Colonic mucosa (tissue), 4 donors: ENCODE measurements at regions of chr6 and their contacts with region 1.

Region 1: GRCh38 chr6:52304983-52305390 is 20.4 kb upstream of the MCM3 start:
- DNase-seq: no peak
- H3K4me3 ChIP-seq: no peak overlapping the region
- H3K27ac ChIP-seq: peak overlapping the region; percentile 65
- H3K4me1 ChIP-seq: peaks cover 7% of the 10 kb centered on the region
- H3K27me3 ChIP-seq: no peaks in the 10 kb centered on the region
- CTCF ChIP-seq: no peak

Region 2: DNA sequence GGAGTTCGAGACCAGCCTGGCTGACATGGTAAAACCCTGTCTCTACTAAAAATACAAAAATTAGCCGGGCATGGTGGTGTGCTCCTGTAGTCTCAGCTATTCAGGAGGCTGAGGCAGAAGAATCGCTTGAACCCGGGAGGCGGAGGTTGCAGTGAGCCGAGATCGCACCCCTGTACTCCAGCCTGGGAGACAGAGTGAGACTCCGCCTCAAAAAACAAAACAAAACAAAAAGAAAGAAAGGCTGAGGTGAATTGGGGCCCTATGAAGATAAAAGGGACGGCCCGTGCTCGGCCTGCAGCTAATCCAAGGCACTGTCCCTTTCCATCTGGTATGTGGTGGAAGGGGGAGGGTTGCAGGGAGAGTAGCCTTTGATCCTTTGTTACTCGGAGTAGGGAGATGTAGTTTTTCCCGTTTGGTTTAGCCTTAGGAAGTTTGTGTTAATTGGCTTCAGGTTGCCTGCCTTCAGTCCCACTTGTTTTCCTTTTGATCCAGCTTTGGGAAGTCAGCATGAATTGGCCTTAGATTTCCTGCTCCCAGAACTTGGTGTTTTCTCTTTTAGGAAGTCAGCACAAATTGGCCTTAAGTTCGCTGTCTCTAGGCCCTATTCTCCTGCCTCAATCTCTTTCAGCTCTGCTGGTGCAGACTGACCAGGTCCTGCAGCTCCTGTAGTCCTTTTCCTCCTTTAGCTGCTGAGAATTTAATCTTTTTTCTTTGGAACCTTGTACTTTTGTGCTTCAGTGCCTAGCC is 20.9 kb after region 1 on chr6:
- intact Hi-C with region 1: loop called (anchors 2 kb)
- DNase-seq: peak; percentile 66
- H3K4me3 ChIP-seq: no peak overlapping the region
- H3K27ac ChIP-seq: peak overlapping the region; percentile 85
- H3K4me1 ChIP-seq: peaks cover 12% of the 10 kb centered on the region
- H3K27me3 ChIP-seq: no peaks in the 10 kb centered on the region
- CTCF ChIP-seq: no peak

Region 3: GRCh38 chr6:52361945-52362442 is 57.0 kb after region 1 on chr6 and contains the start of gene PAQR8:
- intact Hi-C with region 1: loop called (anchors 10 kb)
- DNase-seq: peak; percentile 82
- H3K4me3 ChIP-seq: peak within 1 kb of the TSS; percentile 65
- H3K27ac ChIP-seq: peak within 1 kb of the TSS; percentile 73
- H3K4me1 ChIP-seq: peaks cover 4% of the 10 kb centered on the region
- H3K27me3 ChIP-seq: no peaks in the 10 kb centered on the region
- CTCF ChIP-seq: no peak
- total RNA-seq, gene PAQR8: 65.8 to 87.8 TPM